Heart right ventricle (tissue), 16 donors: ENCODE measurements at regions of chr12 and their contacts with region 1.

Region 1: DNA sequence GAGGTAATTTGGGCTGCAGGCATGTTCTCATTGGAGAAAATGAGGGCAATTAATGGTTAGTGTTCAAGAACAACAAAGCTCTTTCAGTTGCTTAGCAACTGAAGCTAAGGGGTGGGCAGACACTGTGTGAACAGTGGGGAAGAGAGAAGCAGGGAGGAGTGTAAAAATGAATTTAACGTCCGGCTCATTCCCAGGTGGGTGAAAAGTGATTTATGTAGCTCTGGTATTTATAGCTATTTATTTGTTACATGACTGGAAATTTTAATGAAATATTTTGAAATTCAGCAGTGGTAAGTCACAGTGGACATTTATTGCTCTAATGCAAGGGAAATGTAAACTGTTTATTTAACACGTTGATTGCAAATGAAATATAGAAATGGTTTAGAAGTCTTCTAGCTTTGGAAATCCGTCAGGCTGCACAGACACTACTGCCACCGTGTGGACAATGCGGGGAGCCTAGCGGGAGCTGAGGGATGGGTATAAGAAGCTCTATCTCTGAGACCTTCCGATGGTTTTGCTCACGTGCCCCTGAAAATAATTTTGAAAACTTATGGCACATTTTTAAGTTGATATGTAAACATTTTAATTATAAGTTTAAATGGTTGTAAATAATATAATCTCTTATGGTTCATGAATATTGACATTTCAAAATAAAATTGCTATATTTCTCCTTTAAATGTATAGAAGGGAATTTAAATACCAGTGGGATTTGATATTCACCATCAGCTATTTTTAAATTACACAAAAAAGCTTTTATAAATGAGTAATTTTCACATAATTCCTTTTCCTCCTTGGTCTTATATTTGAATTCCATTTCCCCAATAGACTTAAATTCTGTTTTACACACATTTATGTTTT is 54.4 kb downstream of the E2F7 start:
- DNase-seq: peak; percentile 67 to 68
- ATAC-seq: peak in 5 of 8 donors; percentile 46 to 75 (median 70)
- H3K4me3 ChIP-seq: peak overlapping the region in 2 of 10 donors; percentile 18 to 29
- H3K27ac ChIP-seq: no peak overlapping the region
- H3K4me1 ChIP-seq: peaks cover 0 to 7% (median 0%) of the 10 kb centered on the region in 9 donors
- H3K27me3 ChIP-seq: peaks cover 0 to 11% (median 0%) of the 10 kb centered on the region in 7 donors
- CTCF ChIP-seq: peak; percentile 84 to 99 (median 95)

Region 2: DNA sequence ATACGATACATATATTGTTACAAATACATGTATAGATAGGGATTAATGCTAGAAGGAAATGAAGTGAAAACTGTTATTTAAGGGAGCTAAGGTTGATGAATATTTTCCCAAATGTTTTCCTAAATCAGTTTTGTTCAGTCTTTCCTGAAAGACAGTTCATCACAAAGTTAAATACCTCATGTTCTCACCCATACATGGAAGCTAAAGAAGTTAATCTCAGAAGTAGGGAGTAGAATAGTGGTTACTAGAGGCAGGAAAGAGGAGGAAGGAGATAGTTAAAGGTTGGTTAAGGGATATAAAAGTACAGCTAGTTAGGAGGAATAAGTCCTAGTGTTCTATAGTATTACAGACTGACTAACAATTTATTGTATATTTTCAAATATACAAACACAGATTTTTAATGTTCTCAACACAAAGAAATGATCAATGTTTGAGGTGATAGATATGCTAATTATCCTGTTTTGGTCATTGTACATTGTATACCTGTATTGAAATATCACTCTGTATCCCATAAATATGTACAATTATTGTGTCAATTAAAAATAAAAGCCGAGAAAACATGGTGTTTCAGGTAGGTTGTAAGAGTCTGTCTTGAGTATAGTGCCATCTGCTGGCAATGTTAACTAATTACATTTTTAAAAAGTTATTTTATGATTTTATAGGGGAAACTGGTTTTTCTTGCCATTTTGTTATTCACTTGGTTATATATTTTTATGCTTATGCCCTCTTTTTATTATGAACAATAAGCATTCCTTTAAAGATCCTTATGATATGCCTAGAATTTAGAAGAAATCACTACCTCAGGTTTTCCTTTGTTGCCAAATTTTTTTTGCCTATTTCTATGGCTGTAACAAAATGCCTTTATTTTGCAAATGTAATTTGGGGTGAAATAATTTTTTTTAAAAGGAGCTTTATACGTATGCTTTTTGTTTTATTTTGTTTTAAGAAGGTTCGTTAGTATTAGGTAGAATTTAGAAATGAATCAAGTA is 220.1 kb before region 1 on chr12:
- intact Hi-C with region 1: loop called in 2 of 10 experiments (anchors 5 kb)
- DNase-seq: no peak
- ATAC-seq: peak in 4 of 8 donors; percentile 38 to 60 (median 46)
- H3K4me3 ChIP-seq: no peak overlapping the region
- H3K27ac ChIP-seq: peak overlapping the region in 1 of 10 donors; percentile 20
- H3K4me1 ChIP-seq: peaks cover 0 to 79% (median 25%) of the 10 kb centered on the region in 9 donors
- H3K27me3 ChIP-seq: no peaks in the 10 kb centered on the region
- CTCF ChIP-seq: peak; percentile 64 to 87 (median 72)

Region 3: DNA sequence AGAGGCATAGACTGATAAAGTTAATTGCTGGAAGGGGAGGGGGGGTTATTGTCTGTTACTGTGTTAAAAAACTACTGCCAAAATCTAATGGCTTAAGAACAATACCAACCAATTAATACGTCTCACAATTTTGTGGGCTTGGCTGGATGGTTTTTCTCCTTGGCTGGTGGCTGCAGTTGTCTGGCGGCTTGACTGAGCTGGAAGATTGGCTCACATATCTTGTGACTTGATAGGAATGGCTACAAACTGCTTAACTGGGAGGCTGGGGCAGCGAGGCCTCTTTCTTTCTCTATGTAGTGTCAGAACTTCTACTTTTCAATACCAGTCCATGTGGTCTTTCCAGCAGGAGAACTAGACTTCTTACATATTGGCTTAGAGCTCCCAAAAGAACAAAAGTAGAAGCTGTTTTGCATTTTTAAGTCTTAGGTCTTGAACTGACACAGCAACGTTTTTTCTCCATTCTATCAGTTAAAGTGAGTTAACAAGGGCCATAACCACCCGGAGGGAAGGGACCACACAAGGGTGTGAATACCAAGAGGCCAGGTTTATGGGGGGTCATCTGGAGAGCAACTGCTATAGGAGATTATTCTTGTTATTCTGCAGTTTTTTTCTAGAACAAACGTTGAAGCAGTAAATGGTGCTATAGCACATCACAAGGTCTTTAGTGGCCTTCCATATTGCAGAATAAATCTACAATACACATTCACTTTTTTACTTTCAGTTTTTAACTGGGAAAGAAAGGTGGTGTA is 200.1 kb before region 1 on chr12:
- intact Hi-C with region 1: loop called in 2 of 10 experiments (anchors 10 kb)
- DNase-seq: no peak
- ATAC-seq: peak in 4 of 8 donors; percentile 38 to 62 (median 49)
- H3K4me3 ChIP-seq: no peak overlapping the region
- H3K27ac ChIP-seq: peak overlapping the region in 1 of 10 donors; percentile 21
- H3K4me1 ChIP-seq: peaks cover 0 to 10% (median 0%) of the 10 kb centered on the region in 9 donors
- H3K27me3 ChIP-seq: no peaks in the 10 kb centered on the region
- CTCF ChIP-seq: no peak

Region 4: GRCh38 chr12:76859611-76860010 is 151.3 kb before region 1 on chr12:
- intact Hi-C with region 1: loop called in 1 of 10 experiments (anchors 10 kb)
- DNase-seq: no peak
- ATAC-seq: no peak
- H3K4me3 ChIP-seq: no peak overlapping the region
- H3K27ac ChIP-seq: no peak overlapping the region
- H3K4me1 ChIP-seq: peaks cover 0 to 6% (median 0%) of the 10 kb centered on the region in 9 donors
- H3K27me3 ChIP-seq: no peaks in the 10 kb centered on the region
- CTCF ChIP-seq: no peak

Region 5: GRCh38 chr12:76878899-76879709 is 131.8 kb before region 1 on chr12 and contains the start of gene CSRP2:
- intact Hi-C with region 1: loop called in 1 of 10 experiments (anchors 5 kb)
- DNase-seq: peak; percentile 88 to 92
- ATAC-seq: peak; percentile 95 to 98 (median 96)
- H3K4me3 ChIP-seq: peak within 1 kb of the TSS; percentile 62 to 89 (median 78)
- H3K27ac ChIP-seq: peak within 1 kb of the TSS; percentile 83 to 96 (median 92)
- H3K4me1 ChIP-seq: peaks cover 0 to 40% (median 22%) of the 10 kb centered on the region in 9 donors
- H3K27me3 ChIP-seq: peaks cover 0 to 40% (median 0%) of the 10 kb centered on the region in 7 donors
- CTCF ChIP-seq: peak in 5 of 9 donors; percentile 17 to 44 (median 29)
- total RNA-seq, gene CSRP2: 9.7 to 43.5 (median 19.7) TPM

Region 6: DNA sequence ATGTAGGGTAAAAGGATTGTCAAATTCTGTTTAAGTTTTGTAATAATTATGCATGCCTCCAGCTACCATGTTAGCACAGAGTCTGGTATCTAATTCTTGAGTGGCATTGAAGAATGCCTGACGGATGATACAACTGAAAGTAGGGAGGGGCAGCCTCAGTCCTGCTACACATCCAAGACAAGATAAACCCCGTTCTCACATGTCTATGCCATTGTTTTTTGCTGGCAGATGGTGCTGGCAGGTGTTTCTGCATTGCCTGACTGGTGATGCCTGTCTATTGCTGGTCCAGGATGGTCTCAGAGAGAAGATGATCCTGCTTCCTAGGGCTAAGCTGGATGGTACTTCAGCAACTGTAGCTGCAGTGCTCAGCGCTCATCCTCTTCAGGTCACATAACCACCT is 573.9 kb after region 1 on chr12:
- intact Hi-C with region 1: no loop called
- DNase-seq: no peak
- ATAC-seq: no peak
- H3K4me3 ChIP-seq: no peak overlapping the region
- H3K27ac ChIP-seq: no peak overlapping the region
- H3K4me1 ChIP-seq: no peaks in the 10 kb centered on the region
- H3K27me3 ChIP-seq: no peaks in the 10 kb centered on the region
- CTCF ChIP-seq: no peak